ENCODE measurements at regions of chr4 and their contacts with region 1.

Region 1: DNA sequence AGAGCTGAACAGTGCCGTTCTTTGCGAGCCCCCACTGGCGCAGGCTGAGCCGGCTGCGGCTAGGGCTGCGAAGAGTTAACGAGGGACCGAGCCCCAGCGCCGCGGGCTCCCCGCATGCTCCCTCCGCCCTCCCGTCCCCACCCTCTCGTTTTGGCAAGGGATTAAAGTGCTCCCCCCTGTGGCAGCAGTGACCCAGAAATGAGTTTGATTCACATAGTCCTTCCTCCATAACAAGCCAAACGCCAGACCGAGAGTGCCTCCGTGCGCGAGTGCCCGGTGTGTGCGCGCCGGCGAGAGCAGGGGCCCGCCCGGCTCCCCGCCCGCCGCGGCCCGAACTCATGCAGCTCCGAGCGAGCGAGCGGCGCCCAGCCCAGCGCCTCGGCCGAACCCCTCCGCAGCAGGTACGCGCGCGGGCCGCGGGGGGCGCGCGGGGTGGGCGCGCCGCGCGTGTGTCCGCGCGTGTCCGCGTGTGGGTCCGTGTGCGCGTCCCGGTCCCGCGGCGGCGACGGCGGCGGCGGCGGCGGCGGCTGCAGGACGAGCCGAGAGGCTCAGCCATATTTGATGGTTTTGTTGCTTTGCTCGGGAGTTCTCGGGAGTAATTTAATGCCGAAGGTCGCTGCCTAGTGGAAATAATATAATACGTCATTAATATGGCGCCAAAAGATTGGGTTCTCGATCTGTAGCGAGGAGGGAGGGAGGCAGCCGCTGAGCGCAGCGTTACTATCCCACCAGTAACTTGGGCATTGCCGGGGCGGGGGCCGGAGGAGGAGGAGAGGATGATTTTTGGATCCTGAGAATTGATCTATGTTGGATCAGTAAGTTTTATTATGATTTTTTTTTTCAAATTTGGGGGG is at the start of gene JADE1:
- DNase-seq: peak; percentile 86 to 97 (median 88)
- ATAC-seq: peak; percentile 73
- H3K4me3 ChIP-seq: peak within 1 kb of the TSS; percentile 93
- H3K27ac ChIP-seq: peak within 1 kb of the TSS; percentile 99
- H3K4me1 ChIP-seq: peaks cover 6 to 19% of the 10 kb centered on the region in 2 experiments; a peak in 4 of 5 replicates
- H3K27me3 ChIP-seq: no peaks in the 10 kb centered on the region
- CTCF ChIP-seq: peak; percentile 75 to 97 (median 97)
- EP300 ChIP-seq: peak; percentile 45; the same call in 1 of the 2 replicates
- POLR2A ChIP-seq: peak; percentile 52
- RAD21 ChIP-seq: peak; percentile 81 to 92
- polyA plus RNA-seq, gene JADE1: 8.3 to 10.8 TPM

Region 2: GRCh38 chr4:128287871-128288688 is 521.6 kb before region 1 on chr4:
- CTCF ChIA-PET with region 1: no interaction called
- POLR2A ChIA-PET with region 1: interaction called, 3 read pairs
- in situ Hi-C with region 1: no loop called
- intact Hi-C with region 1: loop called (anchors 5 kb)
- DNase-seq: peak; percentile 97 to 99 (median 98)
- ATAC-seq: peak; percentile 83
- H3K4me3 ChIP-seq: peak overlapping the region; percentile 59
- H3K27ac ChIP-seq: peak overlapping the region; percentile 89
- H3K4me1 ChIP-seq: peaks cover 4 to 28% of the 10 kb centered on the region in 2 experiments
- H3K27me3 ChIP-seq: no peaks in the 10 kb centered on the region
- CTCF ChIP-seq: peak; percentile 27 to 38 (median 33); a peak in 5 of 6 replicates
- EP300 ChIP-seq: peak; percentile 49; the same call in 1 of the 2 replicates
- POLR2A ChIP-seq: peak; percentile 82
- RAD21 ChIP-seq: 0 out of 4 replicates have a peak, but pooled peaks of 1 of the 2 experiments have one; percentile 17

Region 3: GRCh38 chr4:128454281-128455075 is 355.2 kb before region 1 on chr4:
- CTCF ChIA-PET with region 1: interaction called, 5 read pairs
- POLR2A ChIA-PET with region 1: interaction called, 10 read pairs
- in situ Hi-C with region 1: no loop called
- intact Hi-C with region 1: loop called (anchors 1 kb)
- DNase-seq: peak; percentile 74 to 88 (median 83)
- ATAC-seq: peak; percentile 98
- H3K4me3 ChIP-seq: no peak overlapping the region
- H3K27ac ChIP-seq: no peak overlapping the region
- H3K4me1 ChIP-seq: peaks cover 0 to 7% of the 10 kb centered on the region in 2 experiments; a peak in 3 of 5 replicates
- H3K27me3 ChIP-seq: no peaks in the 10 kb centered on the region
- CTCF ChIP-seq: peak; percentile 79 to 91 (median 91)
- EP300 ChIP-seq: peak; percentile 55
- POLR2A ChIP-seq: no peak
- RAD21 ChIP-seq: peak; percentile 92

Region 4: GRCh38 chr4:128574706-128575105 is 235.0 kb before region 1 on chr4:
- CTCF ChIA-PET with region 1: interaction called, 3 read pairs
- POLR2A ChIA-PET with region 1: no interaction called
- in situ Hi-C with region 1: no loop called
- intact Hi-C with region 1: loop called (anchors 2 kb)
- DNase-seq: peak; percentile 79 to 89 (median 80)
- ATAC-seq: peak; percentile 96
- H3K4me3 ChIP-seq: no peak overlapping the region
- H3K27ac ChIP-seq: no peak overlapping the region
- H3K4me1 ChIP-seq: peaks cover 6 to 8% of the 10 kb centered on the region in 2 experiments; a peak in 3 of 5 replicates
- H3K27me3 ChIP-seq: no peaks in the 10 kb centered on the region
- CTCF ChIP-seq: peak; percentile 75 to 90 (median 85)
- EP300 ChIP-seq: peak; percentile 11; the same call in 1 of the 2 replicates
- POLR2A ChIP-seq: no peak
- RAD21 ChIP-seq: peak; percentile 84

Region 5: DNA sequence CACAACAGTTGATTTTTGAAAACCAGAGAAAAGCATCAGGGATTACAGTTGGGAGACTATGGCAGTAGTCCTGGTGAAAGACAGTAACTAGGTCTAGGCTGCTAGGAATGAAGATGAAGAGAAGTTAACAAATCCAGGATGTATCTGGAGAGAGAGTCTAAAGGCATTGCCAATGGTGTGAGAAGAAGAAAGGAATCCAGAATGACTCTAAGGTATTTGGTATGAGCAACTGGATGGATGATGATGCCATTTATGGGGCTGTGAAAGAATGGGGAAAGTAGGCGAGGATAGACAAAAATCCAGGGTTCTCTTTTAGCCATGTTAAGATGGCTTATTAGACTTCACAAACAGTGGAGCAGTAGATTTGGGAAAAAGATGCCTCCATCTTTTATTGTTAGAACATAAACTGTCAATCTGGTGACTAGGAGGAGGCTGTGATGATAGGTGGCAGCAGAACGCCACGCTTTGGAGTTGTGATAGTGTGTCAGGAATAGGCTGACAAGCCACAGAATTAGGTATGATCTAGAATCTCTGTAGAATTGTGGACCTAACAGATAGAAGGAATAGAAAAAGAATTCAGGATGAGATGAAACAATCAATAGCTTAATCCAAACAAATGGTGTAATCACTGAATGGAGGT is 27.5 kb before region 1 on chr4:
- CTCF ChIA-PET with region 1: no interaction called
- POLR2A ChIA-PET with region 1: interaction called, 3 read pairs
- in situ Hi-C with region 1: no loop called
- intact Hi-C with region 1: loop called (anchors 2 kb)
- DNase-seq: peak in 2 of 4 experiments; percentile 17 to 50
- ATAC-seq: peak; percentile 88
- H3K4me3 ChIP-seq: no peak overlapping the region
- H3K27ac ChIP-seq: no peak overlapping the region
- H3K4me1 ChIP-seq: no peaks in the 10 kb centered on the region
- H3K27me3 ChIP-seq: no peaks in the 10 kb centered on the region; a peak in 1 of 5 replicates
- CTCF ChIP-seq: peak; percentile 32 to 67 (median 36); a peak in 5 of 6 replicates
- EP300 ChIP-seq: no peak
- POLR2A ChIP-seq: no peak
- RAD21 ChIP-seq: peak; percentile 37 to 55; a peak in 3 of 4 replicates

Region 6: GRCh38 chr4:128831531-128832242 is 22.0 kb after region 1 on chr4:
- CTCF ChIA-PET with region 1: no interaction called
- POLR2A ChIA-PET with region 1: interaction called, 14 read pairs
- in situ Hi-C with region 1: no loop called
- intact Hi-C with region 1: no loop called
- DNase-seq: no peak
- ATAC-seq: no peak
- H3K4me3 ChIP-seq: no peak overlapping the region
- H3K27ac ChIP-seq: peak overlapping the region; percentile 19; the same call in 1 of the 3 replicates
- H3K4me1 ChIP-seq: peaks cover 0 to 17% of the 10 kb centered on the region in 2 experiments; a peak in 2 of 5 replicates
- H3K27me3 ChIP-seq: no peaks in the 10 kb centered on the region
- CTCF ChIP-seq: no peak
- EP300 ChIP-seq: no peak
- POLR2A ChIP-seq: no peak
- RAD21 ChIP-seq: no peak

Region 7: DNA sequence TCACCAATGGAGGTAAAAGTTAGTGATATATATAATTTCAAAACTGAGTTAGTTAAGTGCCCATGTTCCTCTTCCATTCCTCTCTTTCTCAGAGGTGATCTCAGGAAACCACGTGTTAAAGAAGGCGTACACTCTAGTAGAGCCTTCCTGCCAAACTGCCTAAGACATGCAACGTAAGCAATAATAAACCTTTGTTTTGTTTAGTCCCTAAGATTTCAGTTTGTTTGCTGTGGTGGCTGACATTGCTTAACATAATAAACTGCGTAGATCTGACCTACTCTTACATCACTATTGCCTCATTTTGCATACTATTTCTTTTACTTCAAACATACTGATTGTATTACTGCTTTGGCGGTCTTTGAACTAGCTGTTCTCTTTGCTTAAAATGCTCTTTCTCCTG is 99.0 kb after region 1 on chr4:
- CTCF ChIA-PET with region 1: no interaction called
- POLR2A ChIA-PET with region 1: no interaction called
- in situ Hi-C with region 1: no loop called
- intact Hi-C with region 1: no loop called
- DNase-seq: no peak
- ATAC-seq: no peak
- H3K4me3 ChIP-seq: no peak overlapping the region
- H3K27ac ChIP-seq: no peak overlapping the region
- H3K4me1 ChIP-seq: no peaks in the 10 kb centered on the region
- H3K27me3 ChIP-seq: no peaks in the 10 kb centered on the region
- CTCF ChIP-seq: no peak
- EP300 ChIP-seq: no peak
- POLR2A ChIP-seq: no peak
- RAD21 ChIP-seq: no peak

Region 8: GRCh38 chr4:129093191-129093920 is 283.7 kb after region 1 on chr4 and contains the start of gene SCLT1:
- CTCF ChIA-PET with region 1: no interaction called
- POLR2A ChIA-PET with region 1: no interaction called
- in situ Hi-C with region 1: no loop called
- intact Hi-C with region 1: loop called (anchors 5 kb)
- DNase-seq: peak; percentile 93 to 99 (median 94)
- ATAC-seq: peak; percentile 86
- H3K4me3 ChIP-seq: peak within 1 kb of the TSS; percentile 68
- H3K27ac ChIP-seq: peak within 1 kb of the TSS; percentile 93
- H3K4me1 ChIP-seq: peaks cover 0 to 5% of the 10 kb centered on the region in 2 experiments; a peak in 4 of 5 replicates
- H3K27me3 ChIP-seq: no peaks in the 10 kb centered on the region
- CTCF ChIP-seq: no peak
- EP300 ChIP-seq: peak; percentile 38; the same call in 1 of the 2 replicates
- POLR2A ChIP-seq: peak; percentile 95
- RAD21 ChIP-seq: no peak
- polyA plus RNA-seq, gene SCLT1: 8.0 to 8.6 TPM